GM13976 (cell line): ENCODE measurements at regions of chr1 and their contacts with region 1.

Region 1: DNA sequence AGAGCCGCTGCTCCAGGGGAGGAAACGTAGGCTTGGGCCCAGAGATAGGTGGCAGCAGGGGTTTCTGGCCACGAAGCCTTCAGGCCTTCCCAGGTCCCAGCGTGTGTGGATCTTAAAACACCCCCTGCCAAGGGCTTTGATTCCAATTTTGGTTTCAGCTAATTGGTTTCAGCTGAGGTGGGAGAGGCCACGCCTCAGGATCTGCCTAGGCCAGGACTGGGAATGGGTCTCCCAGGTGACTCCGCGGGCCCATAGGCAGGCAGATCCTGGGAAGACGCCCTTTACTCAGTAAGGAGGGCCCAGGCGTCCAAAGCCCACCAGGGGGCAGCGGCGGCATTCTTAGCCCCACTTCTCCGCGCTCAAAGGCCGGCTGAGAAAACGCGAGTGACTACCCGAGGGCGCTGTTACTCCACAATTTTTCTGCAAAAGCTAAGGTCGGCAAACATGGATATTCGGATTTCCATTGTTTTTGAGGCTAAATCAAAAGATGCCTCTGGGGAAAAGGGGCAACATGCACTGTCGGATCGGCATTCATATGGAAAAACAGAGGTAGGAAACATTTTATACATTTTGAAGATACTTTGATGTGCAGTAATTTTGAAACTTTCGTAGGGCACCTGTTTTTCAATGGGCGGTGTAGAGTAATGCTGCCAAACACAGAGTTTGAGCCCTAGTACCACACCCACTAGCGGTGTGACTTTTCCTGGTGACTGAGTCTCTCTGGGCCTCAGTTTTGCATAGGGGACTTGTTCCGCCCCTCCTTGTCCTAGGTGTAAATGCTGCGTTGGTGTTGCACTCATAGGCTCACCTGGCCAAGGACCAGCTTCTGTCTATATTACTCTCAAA is 31.8 kb upstream of the BCL10 start:
- DNase-seq: peak; percentile 69
- CTCF ChIP-seq: peak; percentile 89

Region 2: DNA sequence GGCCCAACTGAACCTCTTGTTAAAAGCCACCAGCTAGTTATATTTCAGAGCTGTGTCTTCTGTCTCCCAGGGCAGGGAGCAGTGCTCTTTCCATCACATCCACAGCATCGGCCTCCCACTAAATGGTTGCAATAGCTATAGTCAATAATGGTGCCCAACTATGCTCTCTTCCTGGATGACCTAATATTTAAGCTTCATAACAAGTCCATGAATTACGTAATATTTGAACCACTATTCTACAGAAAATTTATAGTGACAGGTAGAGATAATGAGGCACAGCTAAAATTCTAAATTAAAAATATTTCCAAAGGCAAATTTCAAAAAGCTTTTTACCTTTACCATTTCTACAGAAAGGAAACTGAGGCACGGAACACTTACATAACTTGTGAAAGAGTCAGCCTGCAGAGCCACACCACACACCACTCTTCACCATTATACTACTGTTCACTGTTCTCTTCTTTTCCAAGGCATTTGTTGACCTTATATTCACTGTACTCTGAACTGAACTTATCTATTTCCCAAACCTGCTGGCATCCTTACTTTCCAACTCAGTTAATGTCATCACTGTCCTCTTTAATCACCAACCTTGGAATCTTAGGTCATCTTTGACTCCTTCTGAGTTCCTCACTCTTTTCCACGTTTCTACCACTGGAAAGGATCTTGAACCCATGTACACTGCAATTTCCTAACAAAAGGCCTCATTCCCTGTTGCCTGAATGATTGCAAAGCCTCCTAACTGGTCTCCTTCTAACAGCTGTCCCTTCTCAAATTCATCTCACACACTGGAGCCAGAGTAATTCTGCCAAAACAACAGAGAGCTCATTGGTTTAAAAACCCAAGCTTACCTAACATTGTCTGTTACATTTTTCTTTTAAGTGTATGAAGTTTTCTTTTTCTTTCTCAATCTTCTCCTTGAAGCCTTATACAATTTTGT is 71.3 kb after region 1 on chr1:
- in situ Hi-C with region 1: no loop called
- DNase-seq: no peak
- CTCF ChIP-seq: no peak

Region 3: DNA sequence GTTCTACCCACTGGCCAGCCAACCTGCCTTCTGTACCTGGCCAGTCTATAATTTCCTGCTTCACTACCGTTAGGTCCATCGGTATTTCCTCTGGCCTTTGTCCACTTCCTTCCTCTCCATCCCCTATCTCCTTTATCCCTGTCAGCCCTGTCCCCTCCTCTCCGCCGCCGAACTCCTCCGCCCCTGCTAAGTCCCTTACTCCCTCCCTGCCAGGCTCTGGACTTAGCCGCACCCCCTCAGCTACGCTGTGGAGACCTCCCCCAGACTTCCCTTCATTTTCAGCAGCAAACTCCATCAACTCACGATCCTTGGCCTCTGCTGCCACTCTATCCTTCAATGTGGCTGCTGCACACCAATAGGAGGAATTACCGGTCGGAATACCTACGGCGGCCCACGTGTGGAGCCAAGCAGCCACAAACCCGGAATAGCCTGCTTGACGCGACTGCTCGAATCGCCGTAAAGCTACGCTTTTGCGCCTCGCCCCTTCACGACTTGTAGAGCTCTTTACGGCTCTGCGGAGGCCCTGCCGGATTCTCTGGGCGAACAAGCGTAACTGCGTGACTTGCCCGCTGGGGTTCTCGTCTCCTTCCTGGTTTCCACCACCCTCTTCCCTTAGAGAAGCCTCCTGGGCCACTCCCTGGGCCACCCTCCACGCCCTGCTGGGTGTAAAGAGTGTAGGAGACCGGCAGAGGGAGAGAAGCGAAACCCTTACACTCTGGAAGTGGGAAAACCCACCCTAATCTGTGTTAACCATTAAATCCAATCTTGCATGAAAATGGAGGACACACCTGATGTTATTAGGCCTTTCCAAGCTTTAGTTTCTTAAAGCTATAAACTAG is 400.0 kb after region 1 on chr1 and contains the start of gene ZNHIT6:
- in situ Hi-C with region 1: loop called (anchors 25 kb)
- DNase-seq: peak; percentile 82
- CTCF ChIP-seq: no peak

Region 4: GRCh38 chr1:85894651-85895050 is 586.4 kb after region 1 on chr1:
- in situ Hi-C with region 1: loop called (anchors 25 kb)
- DNase-seq: peak; percentile 63
- CTCF ChIP-seq: peak; percentile 26

Region 5: DNA sequence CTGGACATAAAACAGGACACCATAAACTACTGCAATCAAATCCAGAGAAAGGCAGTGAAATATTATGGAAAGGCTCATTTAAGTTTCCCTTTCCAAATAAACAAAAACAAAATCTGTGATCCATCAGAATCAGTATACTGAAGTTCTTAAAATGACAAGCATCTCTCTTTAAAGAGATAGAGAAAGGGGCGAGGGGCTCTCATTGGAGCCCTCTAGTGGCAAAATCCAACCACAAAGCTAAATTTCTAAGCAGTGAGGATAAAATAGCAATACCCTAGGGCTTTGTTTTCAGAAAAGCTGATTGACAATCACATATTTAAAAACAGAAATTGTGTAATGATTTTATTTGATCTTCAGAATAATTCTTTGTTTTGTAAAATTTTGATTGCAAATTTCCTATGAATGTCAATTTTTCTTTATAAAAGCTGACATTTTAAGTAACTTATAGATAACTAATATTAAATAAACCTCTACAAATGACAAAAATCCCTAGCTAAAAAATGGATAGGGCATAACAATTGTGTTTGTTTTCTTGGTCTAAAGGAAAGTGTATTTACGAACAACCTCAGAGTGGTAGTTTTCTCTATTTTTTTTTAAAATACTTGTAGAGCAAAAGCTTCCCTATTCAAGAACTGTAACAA is 710.2 kb after region 1 on chr1:
- in situ Hi-C with region 1: loop called (anchors 25 kb)
- DNase-seq: peak; percentile 25
- CTCF ChIP-seq: peak; percentile 30